HCT116 (cell line): ENCODE measurements at regions of chr17 and their contacts with region 1.

Region 1: DNA sequence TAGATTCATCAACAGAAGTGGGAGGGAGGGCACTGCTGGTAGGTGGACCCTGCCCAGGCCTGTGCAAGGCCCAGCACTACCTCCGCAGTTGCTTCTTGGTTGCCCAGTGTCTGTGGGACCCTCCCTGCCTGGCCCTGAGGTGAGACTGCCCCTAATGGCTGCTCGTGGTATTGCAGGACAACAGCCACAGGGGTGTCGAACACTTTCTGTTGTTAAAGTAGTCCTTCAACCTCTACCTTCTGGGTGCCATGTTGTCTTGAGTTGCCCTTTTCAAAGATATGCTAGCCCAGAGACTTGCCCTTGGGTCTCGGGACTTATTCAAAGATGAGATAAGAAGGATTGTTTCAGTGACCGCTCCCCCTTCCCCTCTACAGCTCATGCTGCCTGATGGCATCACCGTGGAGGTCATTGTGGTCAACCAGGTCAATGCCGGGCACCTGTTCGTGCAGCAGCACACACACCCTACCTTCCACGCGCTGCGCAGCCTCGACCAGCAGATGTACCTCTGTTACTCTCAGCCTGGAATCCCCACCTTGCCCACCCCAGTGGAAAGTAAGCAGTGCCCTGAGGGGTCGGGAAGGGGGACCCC is 29.1 kb downstream of the AKAP1 start:
- DNase-seq: no peak
- ATAC-seq: peak; percentile 87
- H3K4me3 ChIP-seq: no peak overlapping the region
- H3K27ac ChIP-seq: no peak overlapping the region
- H3K4me1 ChIP-seq: peaks cover 7% of the 10 kb centered on the region in 2 experiments
- H3K27me3 ChIP-seq: no peaks in the 10 kb centered on the region
- CTCF ChIP-seq: peak; percentile 73 to 100 (median 99)
- POLR2A ChIP-seq: no peak
- RAD21 ChIP-seq: peak; percentile 82

Region 2: DNA sequence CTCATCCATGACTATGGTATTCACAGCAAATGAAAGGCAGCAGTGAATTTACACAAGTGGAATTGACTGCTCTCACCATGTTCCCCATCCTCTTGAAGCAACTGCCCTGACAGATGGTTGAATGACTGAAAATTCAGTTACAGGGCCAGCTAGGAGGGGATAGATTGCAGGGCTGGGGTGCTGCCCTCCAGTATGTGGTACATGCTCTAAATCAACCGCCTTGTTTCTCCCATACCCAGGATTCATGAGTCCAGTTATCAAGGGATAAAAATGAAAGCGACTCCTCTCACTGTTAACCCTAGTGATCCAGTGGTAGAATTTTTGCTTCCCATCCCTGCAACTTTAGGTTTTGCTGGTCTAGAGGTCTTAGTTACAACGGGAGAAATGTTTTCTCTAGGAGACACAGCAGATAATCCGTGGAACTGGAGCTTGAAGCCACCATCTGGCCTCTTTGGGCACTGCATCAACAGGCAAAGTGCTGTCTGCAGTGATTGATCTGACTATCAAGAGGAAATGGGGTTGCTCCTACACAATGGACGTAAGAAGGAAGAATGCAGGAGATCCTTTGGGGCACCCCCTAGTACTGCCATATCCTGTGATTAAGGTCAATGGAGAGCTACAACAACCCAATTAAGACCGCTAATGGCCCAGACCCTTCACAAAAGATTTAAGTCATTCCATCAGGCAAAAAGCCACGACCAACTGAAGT is 104.3 kb before region 1 on chr17:
- CTCF ChIA-PET with region 1: no interaction called
- POLR2A ChIA-PET with region 1: no interaction called
- RAD21 ChIA-PET with region 1: no interaction called
- intact Hi-C with region 1: loop called (anchors 5 kb)
- DNase-seq: peak; percentile 61
- ATAC-seq: peak; percentile 98
- H3K4me3 ChIP-seq: no peak overlapping the region
- H3K27ac ChIP-seq: no peak overlapping the region
- H3K4me1 ChIP-seq: no peaks in the 10 kb centered on the region
- H3K27me3 ChIP-seq: no peaks in the 10 kb centered on the region
- CTCF ChIP-seq: peak; percentile 48 to 90 (median 88); a peak in 5 of 6 replicates
- POLR2A ChIP-seq: no peak
- RAD21 ChIP-seq: peak; percentile 70

Region 3: GRCh38 chr17:57045868-57046704 is 68.1 kb before region 1 on chr17:
- CTCF ChIA-PET with region 1: no interaction called
- POLR2A ChIA-PET with region 1: no interaction called
- RAD21 ChIA-PET with region 1: no interaction called
- intact Hi-C with region 1: no loop called
- DNase-seq: no peak
- ATAC-seq: no peak
- H3K4me3 ChIP-seq: no peak overlapping the region
- H3K27ac ChIP-seq: no peak overlapping the region
- H3K4me1 ChIP-seq: no peaks in the 10 kb centered on the region
- H3K27me3 ChIP-seq: peaks cover 6% of the 10 kb centered on the region; the same call in 1 of the 2 replicates
- CTCF ChIP-seq: no peak
- POLR2A ChIP-seq: no peak
- RAD21 ChIP-seq: no peak

Region 4: DNA sequence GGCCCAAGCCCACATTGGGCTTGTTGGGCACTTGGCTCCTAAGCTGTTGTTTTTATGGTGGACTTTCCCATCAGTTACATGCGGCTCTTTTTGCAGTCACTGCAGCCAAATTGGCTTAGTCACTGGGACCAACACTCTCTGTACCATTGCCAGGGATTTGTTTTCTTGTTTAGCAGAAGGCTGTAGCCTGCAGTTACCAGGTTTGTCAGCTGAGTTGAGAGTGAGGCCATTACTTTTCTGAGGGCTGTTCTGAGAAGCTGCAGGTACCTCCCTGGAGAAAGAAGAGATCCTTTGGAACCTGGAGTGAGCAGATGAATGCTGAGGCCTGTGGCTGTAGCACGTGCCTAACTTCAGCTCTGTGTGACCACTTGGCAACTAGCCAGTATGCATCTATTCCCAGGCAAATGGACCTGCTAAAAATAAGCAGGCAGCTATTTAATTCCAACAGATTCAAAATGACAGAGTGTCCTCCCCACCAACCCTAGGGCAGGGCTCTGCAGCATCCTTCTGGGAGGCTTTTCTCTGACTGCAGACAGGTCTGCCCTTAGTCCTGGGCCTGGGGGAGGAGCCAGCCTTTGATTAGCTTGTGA is 16.3 kb before region 1 on chr17:
- CTCF ChIA-PET with region 1: no interaction called
- POLR2A ChIA-PET with region 1: no interaction called
- RAD21 ChIA-PET with region 1: no interaction called
- intact Hi-C with region 1: no loop called
- DNase-seq: no peak
- ATAC-seq: no peak
- H3K4me3 ChIP-seq: no peak overlapping the region
- H3K27ac ChIP-seq: peak overlapping the region; percentile 1; the same call in 1 of the 2 replicates
- H3K4me1 ChIP-seq: peaks cover 12 to 26% of the 10 kb centered on the region in 2 experiments; a peak in 2 of 4 replicates
- H3K27me3 ChIP-seq: no peaks in the 10 kb centered on the region
- CTCF ChIP-seq: no peak
- POLR2A ChIP-seq: no peak
- RAD21 ChIP-seq: no peak

Region 5: DNA sequence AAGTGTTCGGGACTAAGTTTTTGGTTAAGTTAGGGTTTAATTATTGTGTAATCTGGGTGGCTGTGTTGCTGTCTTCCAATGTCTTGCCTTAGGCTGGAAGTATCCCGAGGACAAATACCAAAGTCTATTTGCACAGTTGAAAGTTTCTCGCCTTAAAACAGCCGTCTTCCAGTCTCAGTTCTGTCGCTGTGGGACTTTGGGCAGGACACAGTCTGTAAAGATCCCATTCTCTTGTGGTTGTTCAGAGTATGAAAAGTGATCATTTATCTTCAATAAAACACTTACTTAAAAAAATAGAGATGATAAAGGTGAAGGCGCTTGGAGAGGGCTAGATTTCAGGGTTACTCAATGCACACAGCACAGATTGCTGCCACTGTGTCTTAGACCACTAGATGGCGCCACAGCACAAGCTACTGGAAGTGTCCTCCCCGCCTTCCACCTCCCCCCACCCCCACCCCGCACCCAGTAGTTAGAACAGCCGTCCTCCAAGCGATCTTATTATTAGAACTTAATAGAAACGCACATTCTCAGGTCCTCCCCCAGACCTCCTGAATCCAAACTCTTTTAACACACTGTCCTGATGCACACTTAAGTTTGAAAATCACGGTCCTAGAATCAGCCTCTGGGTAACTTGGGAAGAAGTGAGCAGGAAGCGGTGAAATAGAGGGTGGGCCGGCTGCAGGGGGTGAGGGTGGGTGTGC is 16.7 kb after region 1 on chr17:
- CTCF ChIA-PET with region 1: no interaction called
- POLR2A ChIA-PET with region 1: no interaction called
- RAD21 ChIA-PET with region 1: no interaction called
- intact Hi-C with region 1: no loop called
- DNase-seq: peak; percentile 70
- ATAC-seq: peak; percentile 97
- H3K4me3 ChIP-seq: no peak overlapping the region; a peak in 1 of 4 replicates
- H3K27ac ChIP-seq: no peak overlapping the region
- H3K4me1 ChIP-seq: peaks cover 0 to 3% of the 10 kb centered on the region in 2 experiments; a peak in 1 of 4 replicates
- H3K27me3 ChIP-seq: no peaks in the 10 kb centered on the region
- CTCF ChIP-seq: peak; percentile 65 to 86 (median 82)
- POLR2A ChIP-seq: no peak
- RAD21 ChIP-seq: peak; percentile 87

Region 6: DNA sequence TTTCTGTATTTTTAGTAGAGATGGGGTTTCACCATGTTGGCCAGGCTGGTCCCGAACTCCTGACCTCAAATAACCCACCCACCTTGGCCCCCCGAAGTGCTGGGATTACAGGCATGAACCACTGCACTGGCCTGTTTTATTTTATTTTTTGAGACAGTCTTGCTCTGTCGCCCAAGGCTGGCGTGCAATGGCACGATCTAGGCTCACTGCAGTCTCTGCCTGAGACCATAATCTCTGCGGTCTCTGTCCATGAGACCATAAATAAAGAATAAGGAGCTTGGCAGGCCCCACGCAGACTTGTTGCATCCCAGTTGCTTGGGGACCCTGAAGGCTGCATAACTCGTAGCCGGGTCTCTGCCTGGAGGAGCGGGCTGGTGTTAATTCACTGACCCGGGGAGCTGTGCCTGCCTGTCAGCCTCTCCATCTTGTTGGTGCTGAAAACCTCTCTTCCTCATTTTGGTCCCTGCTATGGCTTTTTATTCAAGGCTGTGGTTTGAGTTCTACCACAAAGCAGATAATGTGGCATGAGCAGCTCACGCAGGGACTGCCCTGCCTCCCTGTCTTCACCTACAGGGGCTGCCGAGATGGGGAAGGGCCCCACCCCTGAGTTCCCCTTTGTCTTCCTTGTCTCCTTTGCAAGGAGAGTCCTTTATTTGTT is 224.2 kb after region 1 on chr17:
- CTCF ChIA-PET with region 1: no interaction called
- POLR2A ChIA-PET with region 1: no interaction called
- RAD21 ChIA-PET with region 1: no interaction called
- intact Hi-C with region 1: no loop called
- DNase-seq: no peak
- ATAC-seq: no peak
- H3K4me3 ChIP-seq: no peak overlapping the region
- H3K27ac ChIP-seq: no peak overlapping the region
- H3K4me1 ChIP-seq: no peaks in the 10 kb centered on the region
- H3K27me3 ChIP-seq: no peaks in the 10 kb centered on the region
- CTCF ChIP-seq: no peak
- POLR2A ChIP-seq: no peak
- RAD21 ChIP-seq: no peak